Caco-2 (cell line): ENCODE measurements at regions of chr3 and their contacts with region 1.

Region 1: DNA sequence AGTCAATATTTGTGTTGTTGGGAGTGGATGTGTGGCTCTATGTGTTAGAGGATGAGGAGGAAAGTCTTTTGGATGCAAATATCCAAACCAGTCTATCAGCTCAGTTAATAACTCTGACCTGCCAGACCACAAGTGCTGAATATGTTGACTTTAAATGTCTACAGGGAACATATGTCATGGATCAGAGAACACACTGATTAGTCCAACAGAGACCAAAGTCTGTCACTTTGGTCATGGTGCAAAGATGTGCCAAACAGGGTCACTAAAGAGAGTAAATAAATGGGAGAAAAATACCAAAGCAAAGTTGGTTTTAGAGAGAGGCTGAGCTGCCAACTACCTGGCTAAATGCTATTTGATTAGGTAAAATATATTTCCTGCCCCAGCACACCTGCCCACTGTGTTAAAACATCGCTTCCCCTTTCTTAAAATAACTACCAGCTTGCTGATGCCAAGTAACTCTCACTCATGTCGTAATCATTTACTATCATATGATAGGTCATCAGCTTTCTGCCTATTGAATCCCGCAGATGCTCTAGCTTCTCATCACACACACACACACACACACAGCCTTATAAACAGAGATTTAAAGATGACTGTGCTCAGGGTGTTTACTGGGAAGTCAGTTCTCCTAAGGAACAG is 173.3 kb downstream of the PDZRN3 start:
- DNase-seq: no peak
- H3K4me3 ChIP-seq: no peak overlapping the region
- H3K4me3 Mint-ChIP-seq: no peak overlapping the region
- H3K27ac Mint-ChIP-seq: no peak overlapping the region
- H3K4me1 ChIP-seq: peaks cover 21% of the 10 kb centered on the region
- H3K4me1 Mint-ChIP-seq: peaks cover 17% of the 10 kb centered on the region
- H3K27me3 ChIP-seq: no peaks in the 10 kb centered on the region
- H3K27me3 Mint-ChIP-seq: no peaks in the 10 kb centered on the region
- CTCF ChIP-seq: no peak

Region 2: GRCh38 chr3:73259856-73260255 is 191.6 kb before region 1 on chr3:
- CTCF ChIA-PET with region 1: interaction called, 10 read pairs
- POLR2A ChIA-PET with region 1: no interaction called
- intact Hi-C with region 1: no loop called
- DNase-seq: no peak
- H3K4me3 ChIP-seq: no peak overlapping the region
- H3K4me3 Mint-ChIP-seq: no peak overlapping the region
- H3K27ac Mint-ChIP-seq: no peak overlapping the region
- H3K4me1 ChIP-seq: no peaks in the 10 kb centered on the region
- H3K4me1 Mint-ChIP-seq: no peaks in the 10 kb centered on the region
- H3K27me3 ChIP-seq: no peaks in the 10 kb centered on the region
- H3K27me3 Mint-ChIP-seq: peaks cover 8% of the 10 kb centered on the region
- CTCF ChIP-seq: no peak

Region 3: DNA sequence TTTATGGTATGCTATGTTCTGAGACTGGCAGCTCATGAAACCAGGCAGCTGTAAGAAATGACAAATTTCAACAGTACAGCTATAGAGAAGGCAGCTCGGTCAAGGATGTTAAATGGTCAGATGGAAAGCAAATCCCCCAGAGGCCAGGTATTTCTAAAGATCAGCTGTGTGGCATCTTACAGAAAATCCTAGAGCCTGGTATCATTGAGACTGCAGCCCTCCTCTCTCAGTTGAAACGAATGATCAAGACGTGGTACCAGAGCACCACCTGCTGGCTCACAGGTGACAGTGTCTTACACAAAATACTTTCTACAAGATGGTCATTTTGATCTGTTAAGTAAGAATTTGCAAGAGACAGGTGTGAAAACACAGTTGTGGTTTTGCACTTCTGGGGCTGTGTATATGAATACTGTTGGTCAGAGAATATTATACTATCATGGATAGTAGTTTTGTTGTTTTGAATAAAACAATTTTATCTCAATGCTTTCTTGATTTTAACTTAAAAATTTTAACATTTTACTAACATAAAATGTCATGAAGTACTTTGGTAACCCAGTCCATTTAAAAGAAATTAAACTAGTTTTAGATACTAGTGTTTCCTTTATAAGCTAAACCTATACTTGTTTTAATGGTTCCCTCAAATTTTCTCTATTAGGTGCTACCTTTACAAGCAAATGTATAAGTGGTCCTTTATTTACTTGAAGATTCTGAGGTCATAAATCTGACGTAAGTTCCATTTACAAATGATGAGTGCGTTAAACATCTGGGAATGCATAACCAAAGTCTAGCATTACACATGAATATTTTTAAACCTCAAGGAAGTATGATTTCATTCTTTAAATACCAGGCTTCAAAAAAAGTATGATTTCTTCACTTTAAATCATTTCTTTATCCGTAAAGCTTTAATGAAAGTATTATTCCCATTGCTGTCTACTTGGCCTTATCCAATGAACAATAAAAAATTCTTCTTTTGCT is 51.5 kb after region 1 on chr3:
- CTCF ChIA-PET with region 1: no interaction called
- POLR2A ChIA-PET with region 1: no interaction called
- intact Hi-C with region 1: loop called (anchors 1 kb)
- DNase-seq: peak; percentile 71 to 72
- H3K4me3 ChIP-seq: no peak overlapping the region
- H3K4me3 Mint-ChIP-seq: no peak overlapping the region
- H3K27ac Mint-ChIP-seq: no peak overlapping the region
- H3K4me1 ChIP-seq: peaks cover 14% of the 10 kb centered on the region
- H3K4me1 Mint-ChIP-seq: no peaks in the 10 kb centered on the region
- H3K27me3 ChIP-seq: no peaks in the 10 kb centered on the region
- H3K27me3 Mint-ChIP-seq: no peaks in the 10 kb centered on the region
- CTCF ChIP-seq: peak; percentile 72 to 85